ENCODE measurements at regions of chr9 and their contacts with region 1.

Region 1: DNA sequence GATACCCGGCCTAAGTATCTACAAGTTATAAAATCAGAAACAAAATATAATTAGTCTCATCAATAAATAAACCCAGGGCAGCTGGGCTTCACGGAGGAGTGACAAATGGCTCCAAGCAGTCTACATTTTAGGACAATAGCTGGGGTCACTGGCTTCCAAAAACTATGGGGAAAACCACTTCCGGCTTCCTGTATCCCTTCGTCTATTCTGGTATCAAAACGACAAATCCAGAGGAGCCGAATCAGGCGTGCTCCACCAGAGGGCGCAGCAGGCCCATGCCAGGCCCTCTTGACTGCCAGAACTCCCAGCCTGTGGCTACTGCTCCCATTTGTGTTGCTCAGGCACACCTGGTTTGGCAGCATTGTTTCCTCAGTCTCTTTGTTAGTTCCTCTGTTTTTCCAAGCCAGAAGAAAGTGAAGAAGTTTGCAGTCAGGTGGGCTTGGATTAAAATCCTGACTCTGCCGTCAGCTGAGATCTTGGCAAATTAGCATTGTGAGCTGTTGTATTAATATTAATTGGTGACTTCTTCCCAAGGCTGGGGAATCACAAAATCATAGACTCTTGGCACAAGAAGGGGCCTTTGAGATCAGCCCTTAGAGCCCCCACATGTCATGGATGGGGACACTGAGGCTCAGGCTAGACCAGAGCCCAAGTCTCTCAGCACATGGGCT is 11.6 kb upstream of the RAB14 start:
- DNase-seq: peak; percentile 75
- ATAC-seq: peak; percentile 64
- H3K4me3 Mint-ChIP-seq: no peak overlapping the region
- H3K27ac Mint-ChIP-seq: no peak overlapping the region
- H3K4me1 Mint-ChIP-seq: peaks cover 20% of the 10 kb centered on the region
- H3K27me3 Mint-ChIP-seq: no peaks in the 10 kb centered on the region

Region 2: DNA sequence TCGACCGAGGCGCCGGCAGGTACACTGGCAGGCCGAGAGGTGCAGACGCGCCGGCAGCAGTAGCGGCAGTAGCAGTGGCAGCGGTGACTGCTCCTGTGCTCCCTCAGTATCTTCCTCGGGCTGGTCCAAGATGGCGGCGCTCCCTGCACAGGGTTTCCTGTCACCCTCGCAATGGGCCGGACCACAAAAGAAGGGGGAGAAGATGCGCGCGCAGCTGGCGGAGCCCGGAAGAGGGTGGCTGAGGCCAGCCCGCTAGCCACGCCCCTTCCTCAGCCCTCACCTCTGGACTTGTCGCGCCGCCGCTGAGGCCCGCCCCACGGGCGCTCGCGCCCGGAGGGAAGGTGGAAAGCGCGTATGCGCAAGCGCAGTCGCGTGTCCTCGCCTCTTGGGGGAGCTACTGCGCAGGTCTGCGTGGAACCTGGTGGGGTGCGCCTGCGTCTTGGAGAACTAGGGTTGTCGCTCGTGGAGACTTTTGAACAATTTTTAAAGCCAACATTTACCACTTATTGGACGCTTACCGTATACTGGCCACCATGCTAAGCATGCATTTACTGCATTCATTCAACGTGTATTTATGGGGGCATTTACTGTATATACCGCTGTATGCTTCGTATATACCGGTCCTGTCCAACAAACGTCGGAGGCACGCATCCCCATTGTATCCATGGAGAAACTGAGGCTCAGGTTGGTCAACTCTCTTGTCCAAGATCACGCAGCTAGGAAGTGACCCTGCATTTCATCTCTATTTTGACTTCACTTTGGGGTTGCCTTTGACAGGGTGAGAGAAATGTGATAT is 11.3 kb before region 1 on chr9 and contains the start of gene RAB14:
- CTCF ChIA-PET with region 1: interaction called, 46 read pairs
- DNase-seq: peak; percentile 100
- ATAC-seq: peak; percentile 90
- H3K4me3 Mint-ChIP-seq: peak within 1 kb of the TSS; percentile 88
- H3K27ac Mint-ChIP-seq: peak within 1 kb of the TSS; percentile 92
- H3K4me1 Mint-ChIP-seq: peaks cover 59% of the 10 kb centered on the region
- H3K27me3 Mint-ChIP-seq: no peaks in the 10 kb centered on the region
- total RNA-seq, gene RAB14: 57.6 to 71.2 TPM

Region 3: GRCh38 chr9:121278535-121279261 is 65.4 kb after region 1 on chr9:
- CTCF ChIA-PET with region 1: interaction called, 14 read pairs
- DNase-seq: peak; percentile 61
- ATAC-seq: peak; percentile 86
- H3K4me3 Mint-ChIP-seq: no peak overlapping the region
- H3K27ac Mint-ChIP-seq: no peak overlapping the region
- H3K4me1 Mint-ChIP-seq: peaks cover 5% of the 10 kb centered on the region
- H3K27me3 Mint-ChIP-seq: no peaks in the 10 kb centered on the region

Region 4: GRCh38 chr9:121336665-121337064 is 123.4 kb after region 1 on chr9:
- CTCF ChIA-PET with region 1: no interaction called
- DNase-seq: no peak
- ATAC-seq: no peak
- H3K4me3 Mint-ChIP-seq: no peak overlapping the region
- H3K27ac Mint-ChIP-seq: no peak overlapping the region
- H3K4me1 Mint-ChIP-seq: peaks cover 22% of the 10 kb centered on the region
- H3K27me3 Mint-ChIP-seq: no peaks in the 10 kb centered on the region

Region 5: DNA sequence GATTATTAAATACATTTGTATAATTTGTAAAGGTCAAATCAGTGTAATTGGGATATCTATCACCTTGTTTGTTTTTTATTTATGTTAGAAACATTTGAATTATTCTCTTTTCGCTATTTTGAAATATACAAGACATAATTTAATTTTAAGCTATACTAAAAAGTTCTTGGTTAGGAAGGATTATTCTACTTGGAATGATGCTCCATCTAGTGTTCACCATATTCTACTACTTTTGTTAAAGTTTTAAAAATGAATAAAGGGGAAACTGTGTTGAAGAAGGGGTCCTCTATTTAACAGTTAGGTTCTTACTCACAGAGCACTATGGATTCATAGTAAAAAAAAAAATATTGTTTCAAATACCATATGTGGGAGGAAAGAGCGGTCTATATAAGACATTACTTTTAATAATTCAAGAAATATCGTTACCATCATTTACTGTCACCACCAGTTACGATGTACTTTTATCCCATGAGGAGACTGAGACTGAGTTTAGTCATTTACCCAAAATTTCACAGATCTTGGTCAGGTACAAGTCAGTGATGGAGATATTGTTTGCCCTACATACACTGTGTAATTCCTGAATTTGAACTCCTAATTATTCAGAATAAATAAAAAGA is 163.1 kb after region 1 on chr9:
- CTCF ChIA-PET with region 1: interaction called, 12 read pairs
- DNase-seq: no peak
- ATAC-seq: no peak
- H3K4me3 Mint-ChIP-seq: no peak overlapping the region
- H3K27ac Mint-ChIP-seq: no peak overlapping the region
- H3K4me1 Mint-ChIP-seq: peaks cover 21% of the 10 kb centered on the region
- H3K27me3 Mint-ChIP-seq: peaks cover 3% of the 10 kb centered on the region

Region 6: GRCh38 chr9:121393318-121393717 is 180.0 kb after region 1 on chr9:
- CTCF ChIA-PET with region 1: interaction called, 35 read pairs
- DNase-seq: no peak
- ATAC-seq: peak; percentile 45
- H3K4me3 Mint-ChIP-seq: no peak overlapping the region
- H3K27ac Mint-ChIP-seq: peak overlapping the region; percentile 73
- H3K4me1 Mint-ChIP-seq: peaks cover 36% of the 10 kb centered on the region
- H3K27me3 Mint-ChIP-seq: no peaks in the 10 kb centered on the region

Region 7: GRCh38 chr9:121399883-121400607 is 186.8 kb after region 1 on chr9:
- CTCF ChIA-PET with region 1: interaction called, 35 read pairs
- DNase-seq: no peak
- ATAC-seq: peak; percentile 78
- H3K4me3 Mint-ChIP-seq: no peak overlapping the region
- H3K27ac Mint-ChIP-seq: no peak overlapping the region
- H3K4me1 Mint-ChIP-seq: peaks cover 8% of the 10 kb centered on the region
- H3K27me3 Mint-ChIP-seq: peaks cover 10% of the 10 kb centered on the region

Measured in activated CD8-positive, alpha-beta memory T cell treated with anti-CD3 and anti-CD28 coated beads, Interleukin-2, amount 10 ng/mL, durations not matched to agents 7 days and 5 days (primary cell).